CD8-positive, alpha-beta T cell (primary cell): ENCODE measurements at regions of chr10 and their contacts with region 1.

Region 1: DNA sequence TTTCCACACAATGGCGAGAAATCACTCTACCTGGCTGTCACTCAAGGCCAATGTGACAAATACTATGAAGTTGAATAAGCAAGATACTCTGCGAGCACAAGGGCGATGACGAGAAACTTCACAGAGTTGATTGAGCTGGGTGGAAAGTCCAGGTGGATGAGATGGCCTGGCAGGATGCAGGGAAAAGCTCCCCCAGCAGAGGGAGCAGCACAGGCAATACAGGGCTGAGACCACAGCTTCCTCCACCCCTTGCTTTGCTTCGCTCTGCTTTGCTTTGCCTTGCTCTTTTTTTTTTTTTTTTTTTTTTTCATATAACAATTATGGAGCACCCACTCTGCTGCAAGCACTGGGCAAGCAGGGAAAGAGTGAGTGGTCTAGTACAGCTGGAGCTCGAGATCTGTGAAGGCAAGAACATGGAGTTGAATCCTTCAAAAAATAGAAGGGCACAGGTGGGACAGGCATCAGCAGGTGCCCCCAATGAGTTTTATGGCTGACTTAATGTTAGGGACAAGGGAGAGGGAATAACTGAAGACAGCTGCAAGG is 88.3 kb downstream of the CABCOCO1 start:
- DNase-seq: peak; percentile 27 to 79 (median 64)
- ATAC-seq: peak; percentile 95
- H3K4me3 ChIP-seq: no peak overlapping the region
- H3K4me3 Mint-ChIP-seq: no peak overlapping the region
- H3K27ac ChIP-seq: no peak overlapping the region
- H3K27ac Mint-ChIP-seq: no peak overlapping the region
- H3K4me1 ChIP-seq: peaks cover 9% of the 10 kb centered on the region
- H3K4me1 Mint-ChIP-seq: peaks cover 21% of the 10 kb centered on the region
- H3K27me3 ChIP-seq: no peaks in the 10 kb centered on the region
- H3K27me3 Mint-ChIP-seq: no peaks in the 10 kb centered on the region
- CTCF ChIP-seq: peak; percentile 67

Region 2: DNA sequence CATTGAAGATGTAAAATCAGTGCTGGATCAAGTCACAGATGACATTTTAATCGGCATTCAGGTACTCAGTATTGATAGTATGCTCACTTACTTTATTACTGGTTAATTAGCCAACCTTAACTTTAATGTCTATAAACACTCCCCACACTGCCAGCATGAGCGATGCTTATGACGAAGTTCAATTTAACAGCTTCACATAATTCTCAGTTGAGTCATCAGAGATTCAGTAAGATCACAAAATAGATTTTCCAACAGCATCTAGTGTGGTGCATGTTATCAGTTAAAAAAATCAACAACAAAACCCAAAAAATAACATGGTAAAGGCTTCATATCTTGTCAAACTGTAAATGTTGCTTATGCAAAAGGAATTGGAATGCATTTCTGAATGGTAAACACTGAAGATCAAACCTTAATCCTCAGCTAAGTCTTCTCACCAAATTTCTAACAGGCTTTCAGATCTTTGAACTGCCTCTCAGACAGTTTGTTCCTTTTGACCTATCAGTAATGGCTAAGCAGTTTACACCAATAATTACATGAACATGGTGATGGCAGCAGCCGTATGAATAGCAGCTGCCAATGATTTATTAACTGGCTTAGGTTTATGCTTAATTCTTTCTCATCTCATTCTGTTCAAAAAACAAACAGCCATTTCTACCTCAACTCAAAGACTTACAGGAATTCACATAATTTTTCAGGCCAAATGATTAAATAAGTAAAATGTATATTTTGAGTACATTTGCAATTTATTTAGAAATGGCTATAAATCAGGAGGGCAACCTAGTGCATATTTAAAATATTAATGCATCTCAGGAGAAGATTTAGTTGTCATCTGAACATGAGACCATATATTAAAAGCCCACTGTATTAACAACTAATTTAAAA is 10.2 kb after region 1 on chr10:
- CTCF ChIA-PET with region 1: interaction called, 17 read pairs
- POLR2A ChIA-PET with region 1: interaction called, 3 read pairs
- intact Hi-C with region 1: no loop called
- DNase-seq: no peak
- ATAC-seq: no peak
- H3K4me3 ChIP-seq: no peak overlapping the region
- H3K4me3 Mint-ChIP-seq: no peak overlapping the region
- H3K27ac ChIP-seq: no peak overlapping the region
- H3K27ac Mint-ChIP-seq: no peak overlapping the region
- H3K4me1 ChIP-seq: peaks cover 7% of the 10 kb centered on the region
- H3K4me1 Mint-ChIP-seq: peaks cover 11% of the 10 kb centered on the region
- H3K27me3 ChIP-seq: no peaks in the 10 kb centered on the region
- H3K27me3 Mint-ChIP-seq: no peaks in the 10 kb centered on the region
- CTCF ChIP-seq: no peak

Region 3: GRCh38 chr10:61819208-61819607 is 68.2 kb after region 1 on chr10:
- CTCF ChIA-PET with region 1: interaction called, 16 read pairs
- POLR2A ChIA-PET with region 1: interaction called, 4 read pairs
- intact Hi-C with region 1: loop called in 1 of 2 experiments (anchors 1 kb)
- DNase-seq: peak in 1 of 9 experiments; percentile 22
- ATAC-seq: no peak
- H3K4me3 ChIP-seq: no peak overlapping the region
- H3K4me3 Mint-ChIP-seq: no peak overlapping the region
- H3K27ac ChIP-seq: no peak overlapping the region
- H3K27ac Mint-ChIP-seq: no peak overlapping the region
- H3K4me1 ChIP-seq: no peaks in the 10 kb centered on the region
- H3K4me1 Mint-ChIP-seq: no peaks in the 10 kb centered on the region
- H3K27me3 ChIP-seq: no peaks in the 10 kb centered on the region
- H3K27me3 Mint-ChIP-seq: no peaks in the 10 kb centered on the region
- CTCF ChIP-seq: no peak

Region 4: DNA sequence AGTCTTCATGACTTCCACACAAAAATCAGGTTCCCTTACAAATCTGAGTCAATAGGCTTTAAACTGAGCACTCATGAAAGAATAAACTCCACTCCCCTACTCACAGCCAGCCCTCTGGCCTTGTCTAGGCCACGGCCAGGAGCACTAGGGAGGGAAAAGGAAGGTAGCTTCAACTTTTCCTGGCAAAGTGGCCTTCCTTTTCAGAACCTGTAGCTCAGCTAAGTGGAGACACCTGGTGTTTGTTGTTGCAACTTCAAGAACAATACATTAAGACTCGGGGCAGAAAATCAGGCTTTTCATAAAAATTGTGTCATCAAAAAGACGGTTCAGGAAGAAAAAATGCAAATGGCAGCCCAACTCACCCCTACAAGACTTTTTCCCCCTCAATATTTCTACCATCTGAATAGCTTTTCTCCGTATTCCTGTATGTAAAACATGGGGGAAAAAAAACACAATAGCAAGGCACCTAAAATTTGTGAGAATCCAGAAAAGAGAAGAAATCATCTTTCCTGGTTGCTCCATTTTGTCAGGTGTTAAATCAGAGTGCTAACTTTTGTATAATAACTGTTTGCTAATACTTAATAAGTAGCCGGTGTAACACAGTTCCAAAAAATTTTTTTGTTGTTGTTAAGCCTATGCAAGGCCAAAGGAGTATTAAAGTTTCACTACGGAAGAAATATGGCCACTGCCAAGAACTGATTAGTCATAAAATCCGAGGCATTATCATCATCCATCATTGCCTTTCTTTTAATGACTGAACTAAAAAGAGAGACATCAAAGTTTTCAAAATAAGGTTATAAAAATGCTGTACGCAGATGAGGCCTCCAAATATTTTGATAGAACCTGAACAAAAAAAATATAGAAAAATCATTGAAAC is 84.3 kb after region 1 on chr10:
- CTCF ChIA-PET with region 1: interaction called, 9 read pairs
- POLR2A ChIA-PET with region 1: interaction called, 4 read pairs
- intact Hi-C with region 1: loop called in 1 of 2 experiments (anchors 1 kb)
- DNase-seq: peak in 2 of 9 experiments; percentile 26 to 37
- ATAC-seq: no peak
- H3K4me3 ChIP-seq: no peak overlapping the region
- H3K4me3 Mint-ChIP-seq: no peak overlapping the region
- H3K27ac ChIP-seq: no peak overlapping the region
- H3K27ac Mint-ChIP-seq: no peak overlapping the region
- H3K4me1 ChIP-seq: no peaks in the 10 kb centered on the region
- H3K4me1 Mint-ChIP-seq: no peaks in the 10 kb centered on the region
- H3K27me3 ChIP-seq: no peaks in the 10 kb centered on the region
- H3K27me3 Mint-ChIP-seq: no peaks in the 10 kb centered on the region
- CTCF ChIP-seq: no peak

Region 5: GRCh38 chr10:61869774-61870525 is 119.0 kb after region 1 on chr10:
- CTCF ChIA-PET with region 1: interaction called, 23 read pairs
- POLR2A ChIA-PET with region 1: interaction called, 4 read pairs
- intact Hi-C with region 1: loop called in 1 of 2 experiments (anchors 1 kb)
- DNase-seq: no peak
- ATAC-seq: no peak
- H3K4me3 ChIP-seq: no peak overlapping the region
- H3K4me3 Mint-ChIP-seq: no peak overlapping the region
- H3K27ac ChIP-seq: no peak overlapping the region
- H3K27ac Mint-ChIP-seq: no peak overlapping the region
- H3K4me1 ChIP-seq: no peaks in the 10 kb centered on the region
- H3K4me1 Mint-ChIP-seq: peaks cover 7% of the 10 kb centered on the region
- H3K27me3 ChIP-seq: no peaks in the 10 kb centered on the region
- H3K27me3 Mint-ChIP-seq: peaks cover 2% of the 10 kb centered on the region
- CTCF ChIP-seq: no peak